ENCODE measurements at regions of chr2 and their contacts with region 1.

Region 1: DNA sequence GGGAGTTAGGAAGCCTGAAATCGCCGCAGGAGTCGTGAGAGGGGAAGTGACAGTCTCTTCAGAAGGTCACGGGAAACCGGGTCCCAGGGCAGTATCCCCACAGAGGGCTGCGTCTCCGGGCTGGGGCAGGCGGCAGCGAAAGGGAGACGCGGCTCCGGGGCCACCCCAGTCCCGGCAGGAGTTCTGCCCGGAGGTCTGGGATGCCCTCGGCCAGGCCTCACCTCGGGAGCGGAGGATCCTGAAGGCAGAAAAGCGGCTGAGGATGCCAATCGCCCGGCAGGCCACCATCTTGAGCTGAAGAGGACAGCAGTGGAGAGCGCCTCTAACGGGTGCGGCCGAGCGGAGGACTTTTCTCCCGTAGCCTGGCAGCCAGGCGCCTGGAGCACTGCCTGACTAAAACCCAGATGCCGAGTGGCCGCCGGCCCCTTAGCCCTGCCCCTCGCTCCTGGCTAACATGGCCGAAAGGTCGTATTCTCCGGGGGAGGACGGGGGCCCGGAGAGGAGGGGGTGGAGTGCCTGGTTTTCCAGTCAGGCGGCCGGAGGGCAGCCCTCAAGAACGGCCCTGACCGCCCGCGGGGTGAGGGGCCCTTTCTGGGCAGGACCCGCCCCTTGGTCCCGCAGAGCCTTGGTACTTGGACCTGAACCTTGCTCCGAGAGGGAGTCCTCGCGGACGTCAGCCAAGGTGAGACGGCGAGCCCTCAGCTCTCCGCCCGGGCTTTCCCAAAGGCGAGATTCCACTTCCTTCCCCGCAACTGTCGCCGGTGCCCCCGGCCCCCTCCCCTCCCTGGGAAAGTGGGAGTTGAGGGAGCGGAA is at the starts of genes HADHA and HADHB:
- DNase-seq: peak; percentile 90
- H3K4me3 Mint-ChIP-seq: peak within 1 kb of the TSS; percentile 98
- H3K27ac Mint-ChIP-seq: peak within 1 kb of the TSS; percentile 95
- H3K4me1 Mint-ChIP-seq: peaks cover 48% of the 10 kb centered on the region
- H3K27me3 Mint-ChIP-seq: no peaks in the 10 kb centered on the region
- total RNA-seq, gene HADHA: 129 to 130 TPM
- total RNA-seq, gene HADHB: 73.8 to 78.1 TPM

Region 2: GRCh38 chr2:26196683-26197418 is 47.7 kb before region 1 on chr2:
- CTCF ChIA-PET with region 1: no interaction called
- POLR2A ChIA-PET with region 1: no interaction called
- intact Hi-C with region 1: loop called (anchors 5 kb)
- DNase-seq: no peak
- H3K4me3 Mint-ChIP-seq: no peak overlapping the region
- H3K27ac Mint-ChIP-seq: no peak overlapping the region
- H3K4me1 Mint-ChIP-seq: peaks cover 12% of the 10 kb centered on the region
- H3K27me3 Mint-ChIP-seq: no peaks in the 10 kb centered on the region

Region 3: GRCh38 chr2:26299471-26300101 is 55.1 kb after region 1 on chr2:
- CTCF ChIA-PET with region 1: no interaction called
- POLR2A ChIA-PET with region 1: interaction called, 3 read pairs
- intact Hi-C with region 1: loop called (anchors 2 kb)
- DNase-seq: peak; percentile 33
- H3K4me3 Mint-ChIP-seq: no peak overlapping the region
- H3K27ac Mint-ChIP-seq: no peak overlapping the region
- H3K4me1 Mint-ChIP-seq: no peaks in the 10 kb centered on the region
- H3K27me3 Mint-ChIP-seq: no peaks in the 10 kb centered on the region

Region 4: GRCh38 chr2:26330113-26330549 is 85.6 kb after region 1 on chr2:
- CTCF ChIA-PET with region 1: interaction called, 15 read pairs
- POLR2A ChIA-PET with region 1: interaction called, 3 read pairs
- intact Hi-C with region 1: loop called (anchors 2 kb)
- DNase-seq: peak; percentile 92
- H3K4me3 Mint-ChIP-seq: peak overlapping the region; percentile 10
- H3K27ac Mint-ChIP-seq: no peak overlapping the region
- H3K4me1 Mint-ChIP-seq: peaks cover 12% of the 10 kb centered on the region
- H3K27me3 Mint-ChIP-seq: no peaks in the 10 kb centered on the region

Region 5: GRCh38 chr2:26345545-26346453 is 101.3 kb after region 1 on chr2 and contains the start of gene SELENOI:
- CTCF ChIA-PET with region 1: interaction called, 7 read pairs
- POLR2A ChIA-PET with region 1: interaction called, 34 read pairs
- intact Hi-C with region 1: loop called (anchors 2 kb)
- DNase-seq: peak; percentile 100
- H3K4me3 Mint-ChIP-seq: peak within 1 kb of the TSS; percentile 93
- H3K27ac Mint-ChIP-seq: peak within 1 kb of the TSS; percentile 94
- H3K4me1 Mint-ChIP-seq: peaks cover 33% of the 10 kb centered on the region
- H3K27me3 Mint-ChIP-seq: no peaks in the 10 kb centered on the region
- total RNA-seq, gene SELENOI: 31.9 to 34.2 TPM